HEK293T (cell line): ENCODE measurements at regions of chr2 and their contacts with region 1.

Region 1: GRCh38 chr2:28401411-28401810 is 8.8 kb downstream of the FOSL2 start:
- DNase-seq: no peak

Region 2: DNA sequence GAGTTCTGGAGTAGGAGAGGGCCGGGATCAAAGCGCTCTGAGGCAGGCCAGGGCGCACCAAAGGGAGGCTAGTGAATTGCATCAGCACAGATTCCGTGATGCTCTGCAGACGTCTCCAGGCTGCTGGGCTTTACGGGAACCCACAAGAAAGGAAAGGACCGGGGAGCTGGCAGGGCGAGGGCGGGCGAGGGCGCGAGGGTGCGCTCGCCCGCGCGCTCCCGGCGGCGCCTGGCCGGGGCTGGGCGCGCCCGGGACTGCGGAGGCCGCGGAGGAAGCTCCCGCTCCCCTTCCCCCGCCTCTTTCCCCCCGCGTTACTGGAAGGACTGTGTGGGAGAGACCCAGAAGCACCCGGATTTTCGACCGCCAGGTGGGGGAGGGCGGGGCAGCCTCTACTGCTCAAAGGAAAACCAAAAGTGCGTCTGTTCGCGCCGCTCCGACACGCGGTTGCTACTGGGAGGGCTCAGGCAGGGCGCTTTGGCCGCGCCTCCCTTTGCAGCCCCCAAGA is 11.1 kb before region 1 on chr2:
- CTCF ChIA-PET with region 1: no interaction called
- POLR2A ChIA-PET with region 1: no interaction called
- DNase-seq: peak; percentile 36

Region 3: GRCh38 chr2:28445448-28446258 is 44.2 kb after region 1 on chr2:
- CTCF ChIA-PET with region 1: interaction called, 11 read pairs
- POLR2A ChIA-PET with region 1: no interaction called
- DNase-seq: no peak